ENCODE measurements at regions of chr1 and their contacts with region 1.

Region 1: GRCh38 chr1:246302711-246303317 is 204.3 kb downstream of the SMYD3 start:
- DNase-seq: no peak
- H3K4me3 Mint-ChIP-seq: no peak overlapping the region
- H3K27ac Mint-ChIP-seq: no peak overlapping the region
- H3K4me1 Mint-ChIP-seq: no peaks in the 10 kb centered on the region
- H3K27me3 Mint-ChIP-seq: no peaks in the 10 kb centered on the region

Region 2: GRCh38 chr1:246161626-246162025 is 141.2 kb before region 1 on chr1:
- CTCF ChIA-PET with region 1: no interaction called
- intact Hi-C with region 1: no loop called
- DNase-seq: no peak
- H3K4me3 Mint-ChIP-seq: no peak overlapping the region
- H3K27ac Mint-ChIP-seq: no peak overlapping the region
- H3K4me1 Mint-ChIP-seq: no peaks in the 10 kb centered on the region
- H3K27me3 Mint-ChIP-seq: no peaks in the 10 kb centered on the region

Region 3: DNA sequence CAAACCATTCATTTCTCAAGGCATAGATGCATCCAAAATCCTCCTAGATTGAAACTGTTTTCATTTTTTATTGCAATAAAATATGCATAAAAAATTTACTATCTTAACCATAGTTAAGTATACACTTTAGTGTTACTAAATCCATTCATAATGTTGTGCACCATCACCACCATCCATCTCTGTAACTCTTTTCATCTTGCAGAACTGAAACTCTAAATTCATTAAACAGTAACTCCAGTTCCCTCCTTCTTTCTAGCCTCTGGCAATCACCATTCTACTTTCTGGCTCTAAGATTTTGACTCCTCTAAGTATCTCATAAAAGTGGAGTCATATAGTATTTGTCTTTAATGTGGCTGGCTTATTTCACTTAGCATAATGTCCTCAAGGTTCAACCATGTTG is 32.6 kb before region 1 on chr1:
- CTCF ChIA-PET with region 1: no interaction called
- intact Hi-C with region 1: loop called (anchors 2 kb)
- DNase-seq: no peak
- H3K4me3 Mint-ChIP-seq: no peak overlapping the region
- H3K27ac Mint-ChIP-seq: no peak overlapping the region
- H3K4me1 Mint-ChIP-seq: no peaks in the 10 kb centered on the region
- H3K27me3 Mint-ChIP-seq: no peaks in the 10 kb centered on the region

Region 4: GRCh38 chr1:246280551-246280950 is 22.3 kb before region 1 on chr1:
- CTCF ChIA-PET with region 1: no interaction called
- intact Hi-C with region 1: no loop called
- DNase-seq: peak; percentile 7
- H3K4me3 Mint-ChIP-seq: no peak overlapping the region
- H3K27ac Mint-ChIP-seq: no peak overlapping the region
- H3K4me1 Mint-ChIP-seq: peaks cover 3% of the 10 kb centered on the region
- H3K27me3 Mint-ChIP-seq: no peaks in the 10 kb centered on the region

Region 5: DNA sequence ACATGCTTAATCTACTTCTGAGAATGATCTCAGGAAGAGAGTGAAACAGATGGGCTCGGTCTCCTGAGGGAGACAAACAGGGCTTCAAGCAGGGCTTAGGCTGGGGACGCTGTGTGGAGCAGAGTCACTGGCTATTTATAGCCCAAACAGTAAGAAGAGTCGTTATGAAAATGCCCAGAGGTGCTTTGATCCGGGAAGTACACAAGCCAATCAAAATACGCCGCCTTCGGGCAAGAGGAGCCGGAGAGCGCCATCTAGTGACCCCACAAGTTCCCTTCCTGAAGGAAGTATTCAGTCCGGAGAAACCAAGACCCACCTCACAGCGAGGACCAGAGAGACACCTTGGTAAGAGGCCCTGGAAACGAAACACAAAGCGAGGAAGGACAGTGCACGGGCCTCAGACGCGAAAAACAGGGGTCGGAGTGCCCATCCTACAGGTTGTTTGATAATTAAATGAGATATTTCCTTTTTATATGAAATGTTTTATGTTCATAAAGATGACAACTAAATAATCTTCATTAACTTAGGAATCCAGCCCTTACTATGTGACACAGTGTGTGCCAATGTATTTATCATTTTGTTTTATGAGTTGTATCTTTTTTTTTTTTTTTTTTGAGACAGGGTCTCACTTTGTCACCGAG is 396.4 kb after region 1 on chr1:
- CTCF ChIA-PET with region 1: no interaction called
- intact Hi-C with region 1: no loop called
- DNase-seq: peak; percentile 93
- H3K4me3 Mint-ChIP-seq: peak overlapping the region; percentile 32
- H3K27ac Mint-ChIP-seq: peak overlapping the region; percentile 30
- H3K4me1 Mint-ChIP-seq: peaks cover 2% of the 10 kb centered on the region
- H3K27me3 Mint-ChIP-seq: peaks cover 6% of the 10 kb centered on the region

Measured in activated naive CD4-positive, alpha-beta T cell treated with anti-CD3 and anti-CD28 coated beads for 36 hours (primary cell).